ENCODE measurements at regions of chr9 and their contacts with region 1.

Region 1: DNA sequence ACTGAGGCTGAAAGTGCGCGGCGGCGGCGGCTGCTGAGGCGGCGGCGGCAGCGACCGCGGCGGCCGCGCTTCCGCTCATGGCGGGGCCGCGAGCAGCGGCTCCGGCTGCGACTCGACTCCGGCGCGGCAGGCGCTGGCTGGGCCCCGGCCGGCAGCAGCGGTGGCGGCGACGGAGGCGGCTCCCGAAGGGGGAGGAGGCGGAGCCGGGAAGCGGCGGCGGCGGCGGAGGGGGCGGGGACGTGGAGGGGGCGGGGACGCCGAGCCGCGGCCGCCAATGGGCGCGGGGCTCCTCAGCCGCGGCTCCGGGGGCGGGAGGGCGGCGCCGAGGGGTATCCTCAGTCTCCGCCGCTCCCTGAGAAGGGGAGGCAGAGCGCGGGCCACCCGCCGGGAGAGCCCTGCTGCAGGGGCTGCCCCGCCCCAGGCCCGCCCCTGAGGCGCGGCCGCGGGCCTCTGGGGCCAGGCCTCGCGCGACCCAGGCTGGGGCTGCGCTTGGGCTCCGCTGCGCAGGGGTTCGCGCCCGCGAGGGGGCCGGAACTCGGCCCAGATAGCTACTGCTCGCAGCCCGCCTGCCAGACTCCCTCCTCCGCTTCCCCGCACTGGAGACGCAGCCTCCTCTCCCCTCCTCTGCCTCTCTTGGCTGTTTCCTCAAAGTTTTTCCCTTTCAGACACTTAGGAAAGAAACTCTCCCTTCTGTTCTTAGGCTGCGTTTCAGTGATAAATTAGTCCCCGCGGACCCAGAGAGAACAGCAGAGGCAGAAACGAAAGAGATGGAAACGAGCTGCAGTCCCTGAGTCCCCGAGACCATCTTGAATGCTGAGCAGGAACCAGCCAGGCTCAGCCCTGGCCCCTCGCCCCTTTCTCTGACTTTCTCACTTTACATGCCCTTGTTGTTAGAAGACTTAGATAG is 85.0 kb upstream of the MELK start:
- DNase-seq: peak; percentile 95
- ATAC-seq: peak; percentile 93
- H3K4me3 Mint-ChIP-seq: peak overlapping the region; percentile 93
- H3K27ac Mint-ChIP-seq: peak overlapping the region; percentile 99
- H3K4me1 Mint-ChIP-seq: peaks cover 63% of the 10 kb centered on the region
- H3K27me3 Mint-ChIP-seq: no peaks in the 10 kb centered on the region

Region 2: DNA sequence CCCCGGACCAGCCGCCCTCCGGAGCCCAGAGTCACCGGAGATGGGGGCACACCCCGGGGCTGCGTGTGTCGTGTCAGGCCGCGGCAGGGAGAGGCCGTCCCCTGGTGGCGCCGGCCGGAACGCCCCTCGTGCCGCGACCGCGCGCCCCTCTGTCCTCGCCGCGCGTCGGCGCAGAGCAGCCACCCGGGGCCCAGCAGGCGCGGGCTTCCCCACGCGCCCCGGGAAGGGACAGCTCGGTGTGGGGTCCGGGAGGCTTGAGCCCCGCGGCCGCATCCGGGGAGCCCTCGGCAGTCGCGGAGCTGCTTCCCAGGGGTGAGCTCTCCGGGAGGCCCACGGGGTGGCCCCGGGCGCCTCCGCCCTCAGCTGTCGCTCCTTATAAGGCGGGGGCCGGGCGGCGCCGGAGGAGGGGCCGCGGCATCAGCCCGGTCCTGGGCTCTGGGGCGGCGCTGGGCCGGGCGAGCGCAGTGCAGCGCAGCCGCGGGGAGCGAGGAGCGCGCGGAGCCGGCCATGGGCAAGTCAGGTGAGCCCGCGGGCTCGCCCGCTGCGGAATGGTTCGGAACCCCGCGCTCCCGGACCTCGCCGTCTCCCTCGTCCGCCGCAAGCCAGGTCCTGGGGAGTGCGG is 351.4 kb before region 1 on chr9 and contains the start of gene GLIPR2:
- CTCF ChIA-PET with region 1: no interaction called
- POLR2A ChIA-PET with region 1: no interaction called
- intact Hi-C with region 1: loop called in 1 of 2 experiments (anchors 5 kb)
- DNase-seq: peak; percentile 88
- ATAC-seq: peak; percentile 96
- H3K4me3 Mint-ChIP-seq: peak within 1 kb of the TSS; percentile 81
- H3K27ac Mint-ChIP-seq: peak within 1 kb of the TSS; percentile 48
- H3K4me1 Mint-ChIP-seq: peaks cover 45% of the 10 kb centered on the region
- H3K27me3 Mint-ChIP-seq: no peaks in the 10 kb centered on the region
- total RNA-seq, gene GLIPR2: 13.7 to 18.4 TPM

Region 3: DNA sequence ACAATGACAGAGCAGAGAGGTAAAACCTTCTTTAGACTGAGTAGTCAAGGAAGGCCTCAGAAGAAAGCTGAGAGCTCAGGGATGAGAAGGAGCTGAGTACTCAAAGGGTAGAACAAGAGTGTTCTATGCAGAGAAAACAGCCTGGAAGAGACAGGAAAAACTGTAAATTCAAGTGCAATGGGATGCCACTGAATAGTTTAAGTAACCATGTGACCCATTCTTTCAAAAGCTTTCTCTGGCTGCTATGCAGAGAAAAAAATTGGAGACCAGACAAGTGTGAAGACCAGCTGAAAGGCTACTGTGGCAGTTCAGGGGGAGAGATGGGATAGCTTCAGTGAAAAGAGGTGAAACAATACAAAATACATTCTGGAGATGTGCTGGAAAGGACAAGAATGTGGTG is 26.4 kb before region 1 on chr9:
- CTCF ChIA-PET with region 1: interaction called, 3 read pairs
- POLR2A ChIA-PET with region 1: interaction called, 5 read pairs
- intact Hi-C with region 1: loop called (anchors 1 kb)
- DNase-seq: no peak
- ATAC-seq: no peak
- H3K4me3 Mint-ChIP-seq: no peak overlapping the region
- H3K27ac Mint-ChIP-seq: no peak overlapping the region
- H3K4me1 Mint-ChIP-seq: peaks cover 56% of the 10 kb centered on the region
- H3K27me3 Mint-ChIP-seq: no peaks in the 10 kb centered on the region

Region 4: GRCh38 chr9:36572515-36573418 is 85.0 kb after region 1 on chr9 and contains the start of gene MELK:
- CTCF ChIA-PET with region 1: no interaction called
- POLR2A ChIA-PET with region 1: no interaction called
- intact Hi-C with region 1: loop called (anchors 1 to 5 kb)
- DNase-seq: peak; percentile 89
- ATAC-seq: peak; percentile 73
- H3K4me3 Mint-ChIP-seq: peak within 1 kb of the TSS; percentile 97
- H3K27ac Mint-ChIP-seq: peak within 1 kb of the TSS; percentile 85
- H3K4me1 Mint-ChIP-seq: peaks cover 27% of the 10 kb centered on the region
- H3K27me3 Mint-ChIP-seq: no peaks in the 10 kb centered on the region
- total RNA-seq, gene MELK: 63.9 to 66.1 TPM

Region 5: DNA sequence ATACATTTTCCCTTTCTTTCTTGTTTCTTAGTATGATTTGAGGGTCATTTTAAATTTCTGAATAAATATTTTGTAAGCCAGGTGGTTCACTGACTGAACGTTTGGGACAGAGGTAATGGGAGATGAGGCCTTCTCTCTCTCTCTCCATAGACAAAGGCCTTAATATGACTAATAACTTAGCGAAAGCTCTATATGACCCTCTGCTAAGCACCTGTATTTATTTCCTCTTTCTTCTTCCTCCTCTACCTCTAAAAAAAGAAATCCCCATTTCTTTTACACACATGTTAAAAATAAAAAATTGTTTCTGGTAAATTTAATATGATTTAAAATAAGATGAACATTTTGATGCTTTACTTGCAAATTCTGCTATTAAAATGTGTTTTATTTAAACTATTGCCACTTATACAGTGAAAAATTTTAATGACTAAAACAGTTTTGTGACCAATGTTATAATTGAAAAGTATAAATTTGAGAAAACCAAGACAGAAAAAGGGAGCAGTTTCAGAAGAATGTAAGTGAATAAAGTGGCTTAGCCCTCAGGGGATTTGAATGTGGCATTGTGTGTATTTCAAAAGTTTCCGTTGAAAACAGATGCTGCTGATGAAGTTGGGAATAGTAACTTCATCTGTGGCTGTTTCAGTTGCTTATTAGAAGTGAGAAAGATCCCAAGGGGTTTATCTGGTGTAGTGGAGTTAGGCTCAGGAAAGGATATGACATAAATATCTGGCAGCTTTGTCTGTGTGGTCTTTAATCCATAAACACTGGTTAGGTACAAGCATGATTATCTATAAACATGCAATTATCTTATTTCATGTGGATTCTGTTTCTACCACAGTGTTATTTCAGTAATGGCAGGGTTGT is 806.2 kb after region 1 on chr9:
- CTCF ChIA-PET with region 1: no interaction called
- POLR2A ChIA-PET with region 1: no interaction called
- intact Hi-C with region 1: loop called (anchors 5 kb)
- DNase-seq: no peak
- ATAC-seq: no peak
- H3K4me3 Mint-ChIP-seq: no peak overlapping the region
- H3K27ac Mint-ChIP-seq: peak overlapping the region; percentile 72
- H3K4me1 Mint-ChIP-seq: peaks cover 79% of the 10 kb centered on the region
- H3K27me3 Mint-ChIP-seq: no peaks in the 10 kb centered on the region

Measured in activated CD4-positive, alpha-beta T cell treated with anti-CD3 and anti-CD28 coated beads for 36 hours (primary cell).